Activated CD8-positive, alpha-beta T cell treated with anti-CD3 and anti-CD28 coated beads for 36 hours (primary cell): ENCODE measurements at regions of chr15 and their contacts with region 1.

Region 1: DNA sequence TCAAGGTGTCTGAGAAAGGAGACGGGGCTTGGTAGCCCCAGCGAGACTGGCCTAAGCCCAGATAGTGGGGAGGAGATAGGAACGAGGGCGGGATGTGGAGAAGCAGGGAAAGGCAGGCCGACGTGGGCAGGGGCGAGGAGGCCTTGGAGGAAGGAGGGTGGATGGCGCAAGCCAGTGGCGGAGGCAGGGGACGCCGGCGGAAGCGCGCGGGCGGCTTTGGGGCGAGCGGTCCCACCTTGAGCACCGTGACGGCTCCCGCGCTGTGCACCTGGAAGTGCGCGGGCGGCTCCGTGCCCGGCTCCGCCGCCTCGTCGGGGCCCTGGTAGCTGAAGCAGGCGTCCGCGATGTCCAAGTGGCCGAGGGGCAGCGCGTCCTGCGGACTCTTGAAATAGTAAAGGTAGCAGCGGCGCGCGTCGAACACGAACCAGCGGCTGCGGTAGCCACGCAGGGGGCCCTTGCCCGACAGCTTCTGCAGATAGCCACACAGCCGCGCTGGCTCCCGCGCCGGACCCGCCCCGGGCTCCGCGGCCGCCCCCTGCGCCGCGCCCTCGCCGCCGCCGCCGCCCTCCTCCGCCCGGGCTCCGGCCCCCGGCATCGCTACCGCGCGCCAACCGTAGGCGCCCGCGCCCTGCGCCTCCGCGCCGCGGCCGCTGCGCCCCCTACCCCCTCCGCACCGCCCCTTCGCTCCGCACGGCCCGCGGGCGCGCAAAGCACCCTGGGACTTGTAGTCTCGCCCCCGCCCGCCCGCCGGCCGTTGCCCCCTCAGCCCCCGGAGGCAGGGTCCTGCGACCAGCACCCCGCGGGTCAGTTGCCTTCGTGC is at the start of gene TBC1D2B:
- DNase-seq: peak; percentile 71
- ATAC-seq: peak; percentile 82
- H3K4me3 Mint-ChIP-seq: peak within 1 kb of the TSS; percentile 91
- H3K27ac Mint-ChIP-seq: peak within 1 kb of the TSS; percentile 92
- H3K4me1 Mint-ChIP-seq: peaks cover 38% of the 10 kb centered on the region
- H3K27me3 Mint-ChIP-seq: no peaks in the 10 kb centered on the region
- CTCF ChIP-seq: no peak
- total RNA-seq, gene TBC1D2B: 62.9 to 65.7 TPM

Region 2: DNA sequence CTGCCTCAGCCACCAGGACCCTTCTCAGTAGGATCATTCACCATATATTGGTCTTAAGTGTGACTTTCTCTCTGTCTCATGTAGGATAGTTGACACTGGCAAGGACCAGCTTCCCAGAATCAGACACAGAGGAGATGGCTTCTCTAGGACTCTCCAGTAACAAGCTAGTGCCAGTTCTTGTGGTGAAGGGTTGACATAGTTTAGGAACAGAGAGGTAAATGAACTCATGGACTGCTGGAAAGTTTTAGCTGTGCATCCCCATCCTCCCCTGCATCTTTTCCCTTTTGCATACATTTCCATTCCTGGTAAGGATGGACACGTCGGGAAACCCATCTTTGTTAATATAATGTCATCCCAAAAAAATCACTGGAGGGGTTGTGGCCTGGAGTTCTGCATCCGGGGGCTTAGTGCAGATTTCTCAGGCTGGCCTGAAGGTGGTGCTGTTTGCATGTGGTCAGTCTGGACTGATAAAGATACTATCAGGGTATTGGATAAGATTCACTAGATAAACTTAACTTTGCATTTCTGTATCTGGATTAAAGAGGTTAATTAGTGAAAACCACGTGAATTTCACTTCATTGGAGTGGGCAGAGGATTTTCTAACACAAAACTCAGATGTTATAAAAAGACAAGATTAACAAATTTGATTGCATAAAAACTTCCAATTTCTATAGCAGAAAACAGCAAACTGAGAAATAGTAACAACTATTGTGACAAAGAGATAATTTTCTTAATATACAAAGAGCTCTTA is 110.6 kb before region 1 on chr15:
- CTCF ChIA-PET with region 1: interaction called, 12 read pairs
- POLR2A ChIA-PET with region 1: no interaction called
- intact Hi-C with region 1: no loop called
- DNase-seq: peak; percentile 45
- ATAC-seq: no peak
- H3K4me3 Mint-ChIP-seq: no peak overlapping the region
- H3K27ac Mint-ChIP-seq: no peak overlapping the region
- H3K4me1 Mint-ChIP-seq: no peaks in the 10 kb centered on the region
- H3K27me3 Mint-ChIP-seq: no peaks in the 10 kb centered on the region
- CTCF ChIP-seq: peak; percentile 90

Region 3: DNA sequence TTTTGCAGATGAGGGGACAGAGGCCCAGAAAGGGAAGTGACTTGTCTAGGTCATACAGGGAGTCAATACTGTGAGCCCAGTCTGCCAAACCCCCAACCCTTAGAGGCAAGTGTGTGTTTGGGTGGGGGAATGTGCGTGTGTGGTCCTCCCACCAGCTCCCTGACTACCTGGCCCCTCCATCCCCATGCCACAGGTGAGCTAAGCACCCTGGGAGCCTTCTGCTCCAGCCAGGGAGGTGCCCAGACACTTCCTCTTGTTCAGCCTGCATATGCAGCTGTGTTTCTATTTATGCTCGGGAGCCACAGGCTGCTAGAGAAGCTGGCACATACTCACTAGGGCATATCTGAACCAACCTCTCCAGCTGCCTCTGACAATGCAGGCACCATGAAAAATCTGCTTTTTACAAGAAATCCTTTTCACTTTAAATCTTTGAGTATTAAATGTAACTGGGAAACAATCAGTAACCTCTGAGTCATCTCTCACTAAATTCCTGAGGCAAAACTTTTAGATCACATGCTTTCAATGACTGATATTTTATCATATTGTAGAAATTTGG is 20.5 kb before region 1 on chr15:
- CTCF ChIA-PET with region 1: interaction called, 83 read pairs
- POLR2A ChIA-PET with region 1: interaction called, 6 read pairs
- intact Hi-C with region 1: loop called (anchors 2 kb)
- DNase-seq: no peak
- ATAC-seq: peak; percentile 45
- H3K4me3 Mint-ChIP-seq: no peak overlapping the region
- H3K27ac Mint-ChIP-seq: peak overlapping the region; percentile 83
- H3K4me1 Mint-ChIP-seq: peaks cover 85% of the 10 kb centered on the region
- H3K27me3 Mint-ChIP-seq: no peaks in the 10 kb centered on the region
- CTCF ChIP-seq: no peak